PC-3 (cell line): ENCODE measurements at regions of chr15 and their contacts with region 1.

Region 1: GRCh38 chr15:63950911-63951481 is 95.3 kb downstream of the DAPK2 start:
- DNase-seq: peak; percentile 75
- ATAC-seq: peak; percentile 96
- H3K4me3 ChIP-seq: no peak overlapping the region
- H3K27ac ChIP-seq: peak overlapping the region; percentile 64
- H3K4me1 ChIP-seq: peaks cover 16% of the 10 kb centered on the region
- H3K27me3 ChIP-seq: no peaks in the 10 kb centered on the region
- CTCF ChIP-seq: no peak

Region 2: DNA sequence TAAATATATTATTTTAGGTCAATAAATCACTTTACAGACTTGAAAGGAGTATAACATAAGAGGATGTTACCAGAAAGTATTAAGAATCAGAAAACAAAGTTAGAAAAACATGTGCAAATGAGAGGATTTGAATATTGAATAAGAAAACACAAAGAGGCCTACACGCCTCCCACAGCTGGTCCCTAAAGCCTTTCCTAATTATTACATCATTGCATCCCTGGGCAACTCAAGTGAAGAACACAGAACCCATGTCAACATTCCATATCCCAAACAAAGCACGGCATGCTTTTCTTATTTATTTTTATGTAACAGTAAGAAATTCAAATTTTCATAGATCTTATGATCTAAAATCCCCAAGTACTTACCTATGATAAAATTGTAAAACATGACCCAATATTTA is 178.5 kb before region 1 on chr15:
- CTCF ChIA-PET with region 1: no interaction called
- POLR2A ChIA-PET with region 1: no interaction called
- intact Hi-C with region 1: no loop called
- DNase-seq: no peak
- ATAC-seq: no peak
- H3K4me3 ChIP-seq: no peak overlapping the region
- H3K27ac ChIP-seq: no peak overlapping the region
- H3K4me1 ChIP-seq: no peaks in the 10 kb centered on the region
- H3K27me3 ChIP-seq: no peaks in the 10 kb centered on the region
- CTCF ChIP-seq: no peak

Region 3: GRCh38 chr15:64016732-64017588 is 66.0 kb after region 1 on chr15:
- CTCF ChIA-PET with region 1: no interaction called
- POLR2A ChIA-PET with region 1: no interaction called
- intact Hi-C with region 1: loop called (anchors 2 kb)
- DNase-seq: peak; percentile 91
- ATAC-seq: peak; percentile 69
- H3K4me3 ChIP-seq: peak overlapping the region; percentile 20; the same call in 1 of the 2 replicates
- H3K27ac ChIP-seq: peak overlapping the region; percentile 85
- H3K4me1 ChIP-seq: peaks cover 53% of the 10 kb centered on the region
- H3K27me3 ChIP-seq: no peaks in the 10 kb centered on the region
- CTCF ChIP-seq: no peak

Region 4: GRCh38 chr15:64046347-64047153 is 95.6 kb after region 1 on chr15 and contains the start of gene DAPK2:
- CTCF ChIA-PET with region 1: no interaction called
- POLR2A ChIA-PET with region 1: interaction called, 4 read pairs
- intact Hi-C with region 1: loop called (anchors 5 kb)
- DNase-seq: peak; percentile 65
- ATAC-seq: peak; percentile 93
- H3K4me3 ChIP-seq: peak within 1 kb of the TSS; percentile 63
- H3K27ac ChIP-seq: no peak within 1 kb of the TSS
- H3K4me1 ChIP-seq: peaks cover 10% of the 10 kb centered on the region; the same call in 1 of the 2 replicates
- H3K27me3 ChIP-seq: no peaks in the 10 kb centered on the region
- CTCF ChIP-seq: peak; percentile 56
- total RNA-seq, gene DAPK2: 1.4 and 5.2 TPM in 2 replicates